GM10248 (cell line): ENCODE measurements at regions of chr10 and their contacts with region 1.

Region 1: GRCh38 chr10:110497438-110498086 is at the start of gene DUSP5:
- DNase-seq: peak; percentile 96
- CTCF ChIP-seq: no peak

Region 2: GRCh38 chr10:109534193-109534592 is 963.4 kb before region 1 on chr10:
- CTCF ChIA-PET with region 1: no interaction called
- POLR2A ChIA-PET with region 1: no interaction called
- DNase-seq: no peak
- CTCF ChIP-seq: no peak

Region 3: DNA sequence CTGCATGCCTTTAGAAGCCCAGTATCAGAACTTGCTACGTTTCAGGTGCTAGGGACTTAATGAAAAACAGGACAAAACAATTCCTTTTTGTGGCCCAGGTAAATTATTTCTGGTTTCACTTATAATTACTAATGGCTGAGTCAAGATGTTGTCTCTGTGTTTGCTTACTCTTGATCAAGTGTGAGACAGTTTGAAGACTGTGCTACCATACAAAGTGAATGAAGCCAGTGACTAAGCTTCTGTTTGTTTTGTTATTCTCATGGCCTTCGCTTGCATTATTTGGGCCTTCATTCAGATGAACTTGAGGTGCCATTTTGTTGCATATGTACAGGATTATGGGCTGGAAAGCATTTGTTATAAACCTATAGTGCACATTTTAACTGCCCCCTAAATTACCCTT is 210.7 kb before region 1 on chr10:
- CTCF ChIA-PET with region 1: no interaction called
- POLR2A ChIA-PET with region 1: no interaction called
- DNase-seq: no peak
- CTCF ChIP-seq: no peak

Region 4: GRCh38 chr10:110481934-110482333 is 15.6 kb before region 1 on chr10:
- CTCF ChIA-PET with region 1: interaction called, 25 read pairs
- POLR2A ChIA-PET with region 1: no interaction called
- DNase-seq: no peak
- CTCF ChIP-seq: no peak

Region 5: DNA sequence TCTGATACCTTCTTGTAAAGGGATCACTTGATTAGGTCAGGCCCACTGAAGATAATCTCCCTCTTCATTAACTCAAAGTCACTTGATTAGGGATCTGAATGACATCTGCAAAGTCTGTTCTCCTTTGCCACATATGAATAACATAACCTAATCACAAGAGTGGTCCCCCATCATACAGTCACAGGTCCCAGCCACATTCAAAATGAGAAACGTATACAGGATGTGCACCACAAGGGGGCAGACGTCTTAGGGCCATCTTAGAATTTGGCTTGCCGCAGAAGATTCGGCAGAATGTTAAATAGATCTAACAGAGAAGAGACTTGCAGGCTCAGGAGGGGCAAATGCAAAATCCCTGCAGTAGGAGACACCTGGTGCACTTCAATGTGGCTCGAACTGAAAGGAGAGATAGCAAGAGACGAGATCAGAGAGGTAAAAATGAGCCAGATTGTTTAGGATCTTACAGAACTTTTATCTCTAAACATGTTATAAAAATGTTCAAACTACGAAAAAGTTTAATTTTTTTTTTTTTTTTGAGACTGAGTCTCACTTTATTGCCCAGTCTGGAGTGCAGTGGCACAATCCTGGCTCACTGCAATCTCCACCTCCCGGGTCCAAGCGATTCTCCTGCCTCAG is 59.5 kb after region 1 on chr10:
- CTCF ChIA-PET with region 1: no interaction called
- POLR2A ChIA-PET with region 1: no interaction called
- DNase-seq: peak; percentile 43
- CTCF ChIP-seq: peak; percentile 74